Activated CD4-positive, alpha-beta memory T cell treated with anti-CD3 and anti-CD28 coated beads for 36 hours (primary cell): ENCODE measurements at regions of chr6 and their contacts with region 1.

Region 1: DNA sequence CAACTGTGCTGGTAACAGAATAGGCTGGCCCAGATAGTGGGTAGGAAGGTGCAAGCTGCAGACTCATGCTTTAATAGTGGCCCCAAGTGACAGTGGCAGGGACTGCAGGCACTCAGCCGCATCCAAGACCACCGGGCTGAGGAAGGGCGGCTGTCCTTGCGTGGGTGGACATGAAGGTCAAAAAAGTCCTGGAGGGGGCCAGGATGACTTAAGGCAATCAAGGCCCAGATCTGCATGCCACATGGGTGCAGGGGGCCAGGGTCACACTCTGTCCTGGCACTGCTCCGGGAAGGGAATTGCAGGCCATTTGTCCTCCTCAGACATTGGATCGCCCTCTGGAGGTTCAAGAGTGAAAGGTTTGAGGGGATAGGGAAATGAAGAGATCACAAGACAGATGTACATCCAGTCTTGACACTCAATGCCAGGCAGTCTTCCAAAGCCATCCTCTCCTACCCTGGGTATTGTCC is 10.4 kb upstream of the VNN2 start:
- DNase-seq: peak; percentile 22
- H3K4me3 Mint-ChIP-seq: no peak overlapping the region
- H3K27ac Mint-ChIP-seq: no peak overlapping the region
- H3K4me1 Mint-ChIP-seq: peaks cover 15% of the 10 kb centered on the region
- H3K27me3 Mint-ChIP-seq: no peaks in the 10 kb centered on the region

Region 2: DNA sequence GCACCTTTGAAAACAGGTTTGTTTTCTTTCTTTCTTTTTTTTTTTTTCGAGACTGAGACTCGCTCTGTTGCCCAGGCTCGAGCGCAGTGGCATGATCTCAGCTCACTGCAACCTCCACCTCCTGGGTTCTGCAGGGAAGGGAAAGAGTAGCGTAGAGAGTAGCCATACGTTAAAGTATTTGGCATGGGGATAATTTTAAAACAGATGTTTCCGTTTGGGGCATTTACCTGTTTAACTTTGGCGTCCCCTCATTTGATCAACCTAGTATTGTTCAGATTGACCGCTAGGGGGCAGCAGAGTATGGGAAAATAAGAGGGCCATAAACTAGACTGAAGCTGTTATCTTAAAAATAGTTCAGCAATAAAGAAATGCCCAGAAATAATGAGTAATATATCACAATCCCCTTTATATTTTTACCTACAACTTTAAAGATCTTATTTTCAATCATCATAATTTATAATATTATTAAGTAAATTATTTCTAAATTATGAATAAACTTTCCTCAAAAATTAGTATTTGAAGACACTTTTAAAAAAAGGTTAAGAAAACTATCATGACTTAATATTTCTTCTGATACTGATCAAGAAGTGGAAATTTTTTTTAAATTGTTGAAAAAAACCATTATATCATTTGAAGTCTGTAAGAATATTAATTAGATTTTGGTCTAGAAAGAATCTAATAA is 237.7 kb before region 1 on chr6:
- CTCF ChIA-PET with region 1: no interaction called
- POLR2A ChIA-PET with region 1: interaction called, 6 read pairs
- intact Hi-C with region 1: loop called (anchors 1 kb)
- DNase-seq: peak; percentile 69
- H3K4me3 Mint-ChIP-seq: no peak overlapping the region
- H3K27ac Mint-ChIP-seq: no peak overlapping the region
- H3K4me1 Mint-ChIP-seq: no peaks in the 10 kb centered on the region
- H3K27me3 Mint-ChIP-seq: peaks cover 7% of the 10 kb centered on the region

Region 3: GRCh38 chr6:132669690-132670291 is 98.3 kb before region 1 on chr6:
- CTCF ChIA-PET with region 1: interaction called, 9 read pairs
- POLR2A ChIA-PET with region 1: no interaction called
- intact Hi-C with region 1: loop called (anchors 1 kb)
- DNase-seq: no peak
- H3K4me3 Mint-ChIP-seq: no peak overlapping the region
- H3K27ac Mint-ChIP-seq: no peak overlapping the region
- H3K4me1 Mint-ChIP-seq: peaks cover 4% of the 10 kb centered on the region
- H3K27me3 Mint-ChIP-seq: peaks cover 5% of the 10 kb centered on the region

Region 4: GRCh38 chr6:132736239-132736638 is 31.8 kb before region 1 on chr6:
- CTCF ChIA-PET with region 1: no interaction called
- POLR2A ChIA-PET with region 1: no interaction called
- intact Hi-C with region 1: loop called (anchors 2 kb)
- DNase-seq: no peak
- H3K4me3 Mint-ChIP-seq: no peak overlapping the region
- H3K27ac Mint-ChIP-seq: no peak overlapping the region
- H3K4me1 Mint-ChIP-seq: peaks cover 17% of the 10 kb centered on the region
- H3K27me3 Mint-ChIP-seq: peaks cover 3% of the 10 kb centered on the region

Region 5: GRCh38 chr6:132749111-132749510 is 19.0 kb before region 1 on chr6:
- CTCF ChIA-PET with region 1: no interaction called
- POLR2A ChIA-PET with region 1: interaction called, 3 read pairs
- intact Hi-C with region 1: loop called (anchors 2 kb)
- DNase-seq: peak; percentile 18
- H3K4me3 Mint-ChIP-seq: no peak overlapping the region
- H3K27ac Mint-ChIP-seq: peak overlapping the region; percentile 64
- H3K4me1 Mint-ChIP-seq: peaks cover 26% of the 10 kb centered on the region
- H3K27me3 Mint-ChIP-seq: no peaks in the 10 kb centered on the region

Region 6: DNA sequence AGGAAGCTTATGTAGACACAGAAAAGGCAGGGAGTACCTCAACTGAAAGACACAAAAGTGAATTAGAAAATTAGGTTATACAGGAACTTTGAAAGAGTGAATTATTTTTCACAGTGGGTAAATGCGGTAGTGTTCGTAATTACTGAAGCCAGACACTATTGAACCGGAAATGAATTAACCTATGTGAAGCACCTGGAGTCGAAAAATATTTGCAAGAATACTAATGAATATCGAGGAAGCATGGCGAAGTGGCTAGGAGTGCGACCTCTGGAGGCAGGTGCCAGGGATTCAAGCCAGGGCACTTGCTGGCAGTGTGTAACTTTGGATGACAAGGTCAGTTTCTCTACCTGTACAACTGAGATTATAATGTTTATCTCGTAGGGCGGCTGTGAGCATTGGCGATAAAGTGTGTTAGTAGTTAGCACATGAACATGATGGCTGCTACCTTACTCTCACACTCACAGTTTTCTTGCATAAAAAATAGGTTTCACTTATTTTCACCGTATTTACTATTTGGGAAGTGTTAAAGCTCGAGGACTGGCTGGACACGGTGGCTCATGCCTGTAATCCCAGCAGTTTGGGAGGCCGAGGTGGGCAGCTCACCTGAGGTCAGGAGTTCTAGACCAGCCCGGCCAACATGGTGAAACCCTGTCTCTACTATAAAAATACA is 30.9 kb after region 1 on chr6:
- CTCF ChIA-PET with region 1: interaction called, 6 read pairs
- POLR2A ChIA-PET with region 1: interaction called, 4 read pairs
- intact Hi-C with region 1: loop called (anchors 1 kb)
- DNase-seq: peak; percentile 84
- H3K4me3 Mint-ChIP-seq: no peak overlapping the region
- H3K27ac Mint-ChIP-seq: no peak overlapping the region
- H3K4me1 Mint-ChIP-seq: peaks cover 19% of the 10 kb centered on the region
- H3K27me3 Mint-ChIP-seq: no peaks in the 10 kb centered on the region

Region 7: GRCh38 chr6:133424359-133424758 is 656.3 kb after region 1 on chr6:
- CTCF ChIA-PET with region 1: no interaction called
- POLR2A ChIA-PET with region 1: no interaction called
- intact Hi-C with region 1: no loop called
- DNase-seq: no peak
- H3K4me3 Mint-ChIP-seq: no peak overlapping the region
- H3K27ac Mint-ChIP-seq: no peak overlapping the region
- H3K4me1 Mint-ChIP-seq: no peaks in the 10 kb centered on the region
- H3K27me3 Mint-ChIP-seq: no peaks in the 10 kb centered on the region